Activated CD4-positive, alpha-beta T cell treated with anti-CD3 and anti-CD28 coated beads for 36 hours (primary cell): ENCODE measurements at regions of chr10 and their contacts with region 1.

Region 1: GRCh38 chr10:133261726-133262325 is 14.8 kb downstream of the ADAM8 start:
- DNase-seq: peak; percentile 93
- ATAC-seq: peak; percentile 30
- H3K4me3 Mint-ChIP-seq: peak overlapping the region; percentile 74
- H3K27ac Mint-ChIP-seq: no peak overlapping the region
- H3K4me1 Mint-ChIP-seq: peaks cover 76% of the 10 kb centered on the region
- H3K27me3 Mint-ChIP-seq: no peaks in the 10 kb centered on the region

Region 2: GRCh38 chr10:131981429-131982184 is 1280.2 kb before region 1 on chr10 and contains the start of gene BNIP3:
- CTCF ChIA-PET with region 1: no interaction called
- POLR2A ChIA-PET with region 1: no interaction called
- intact Hi-C with region 1: loop called in 1 of 2 experiments (anchors 5 kb)
- DNase-seq: peak; percentile 97
- ATAC-seq: peak; percentile 90
- H3K4me3 Mint-ChIP-seq: peak within 1 kb of the TSS; percentile 90
- H3K27ac Mint-ChIP-seq: peak within 1 kb of the TSS; percentile 79
- H3K4me1 Mint-ChIP-seq: peaks cover 36% of the 10 kb centered on the region
- H3K27me3 Mint-ChIP-seq: no peaks in the 10 kb centered on the region
- total RNA-seq, gene BNIP3: 200 to 256 TPM

Region 3: DNA sequence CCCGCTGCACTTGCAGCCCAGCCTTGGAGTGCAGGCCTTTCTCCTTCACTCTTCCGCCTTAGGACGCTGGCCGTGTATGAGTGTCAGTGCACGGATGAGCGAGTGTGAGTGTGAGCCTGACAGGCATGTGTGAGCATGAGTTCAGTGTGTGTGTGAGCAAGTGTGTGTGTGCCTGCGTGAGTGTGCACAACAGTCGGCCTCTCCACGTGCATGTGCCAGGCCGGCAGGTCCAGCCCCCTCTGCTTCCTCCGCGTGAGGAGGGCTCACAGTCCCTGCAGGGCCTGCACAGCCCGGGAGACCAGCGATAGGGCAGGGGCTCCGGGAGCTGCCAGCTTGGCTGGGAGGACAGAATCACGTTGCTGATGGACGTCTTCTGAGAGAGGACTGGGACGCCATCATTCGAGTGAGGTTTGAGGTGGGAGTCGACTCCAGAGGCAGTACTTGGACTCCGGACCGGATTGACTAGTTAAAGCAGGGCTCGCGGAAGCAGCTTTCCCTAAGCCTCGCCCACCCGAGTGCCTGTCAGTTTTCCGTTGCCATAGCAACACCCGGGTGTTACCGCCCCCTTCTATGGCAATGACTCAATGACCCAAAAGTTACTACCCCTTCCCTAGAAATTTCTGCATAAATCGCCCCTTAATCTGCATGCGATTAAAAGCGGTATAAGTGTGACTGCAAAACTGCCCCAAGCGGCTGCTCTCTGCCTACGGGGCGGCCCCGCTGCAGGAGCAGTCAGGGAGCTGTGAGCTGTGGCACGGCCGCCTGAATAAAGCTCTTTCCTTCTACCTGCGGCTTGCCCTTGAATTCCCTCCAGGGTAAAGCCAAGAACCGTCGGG is 299.8 kb before region 1 on chr10:
- CTCF ChIA-PET with region 1: interaction called, 3 read pairs
- POLR2A ChIA-PET with region 1: no interaction called
- intact Hi-C with region 1: loop called in 1 of 2 experiments (anchors 1 kb)
- DNase-seq: peak; percentile 90
- ATAC-seq: peak; percentile 82
- H3K4me3 Mint-ChIP-seq: peak overlapping the region; percentile 73
- H3K27ac Mint-ChIP-seq: peak overlapping the region; percentile 71
- H3K4me1 Mint-ChIP-seq: peaks cover 26% of the 10 kb centered on the region
- H3K27me3 Mint-ChIP-seq: peaks cover 26% of the 10 kb centered on the region

Region 4: GRCh38 chr10:133249094-133249780 is 12.6 kb before region 1 on chr10:
- CTCF ChIA-PET with region 1: no interaction called
- POLR2A ChIA-PET with region 1: no interaction called
- intact Hi-C with region 1: no loop called
- DNase-seq: no peak
- ATAC-seq: no peak
- H3K4me3 Mint-ChIP-seq: no peak overlapping the region
- H3K27ac Mint-ChIP-seq: no peak overlapping the region
- H3K4me1 Mint-ChIP-seq: no peaks in the 10 kb centered on the region
- H3K27me3 Mint-ChIP-seq: no peaks in the 10 kb centered on the region

Region 5: DNA sequence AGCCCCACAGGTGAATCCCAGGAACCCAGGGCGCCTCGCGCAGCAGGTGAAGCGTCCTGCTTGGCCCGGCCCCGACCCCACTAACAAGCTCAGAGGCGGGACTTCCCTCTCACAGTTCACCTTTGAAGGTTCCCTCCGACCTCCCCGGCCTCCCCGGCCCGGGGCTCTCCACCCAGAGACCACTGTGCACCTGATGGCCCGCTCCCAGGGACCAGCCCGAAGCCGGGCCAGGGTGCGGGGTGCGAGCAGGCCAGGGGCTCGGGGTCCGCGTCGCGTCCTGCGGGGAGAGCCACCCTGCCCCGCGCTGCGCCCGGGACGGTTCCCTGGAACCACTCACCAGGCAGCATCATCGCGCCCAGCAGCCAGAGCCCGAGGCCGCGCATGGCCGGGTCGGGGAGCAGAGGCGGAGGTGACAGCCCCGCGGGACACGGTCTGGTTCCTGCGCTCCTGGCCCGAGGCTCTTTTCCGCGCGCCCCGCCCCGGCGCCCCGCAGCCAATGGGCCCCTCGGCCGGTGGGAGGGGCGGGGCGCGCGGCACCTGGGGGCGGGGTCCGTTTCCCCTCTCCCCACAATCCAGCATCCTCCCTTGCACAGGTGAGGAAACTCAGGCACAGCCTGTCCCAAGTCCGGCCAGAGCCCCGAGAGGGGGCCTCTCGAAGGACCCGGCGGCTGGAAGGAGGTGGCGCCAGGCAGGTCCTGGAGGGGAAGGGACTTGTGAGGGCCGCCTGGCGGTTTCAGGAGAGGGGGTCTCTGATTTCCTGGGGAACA is 14.8 kb after region 1 on chr10 and contains the start of gene ADAM8:
- CTCF ChIA-PET with region 1: interaction called, 12 read pairs
- POLR2A ChIA-PET with region 1: interaction called, 13 read pairs
- intact Hi-C with region 1: loop called (anchors 1 kb)
- DNase-seq: peak; percentile 86
- ATAC-seq: peak; percentile 55
- H3K4me3 Mint-ChIP-seq: peak within 1 kb of the TSS; percentile 92
- H3K27ac Mint-ChIP-seq: peak within 1 kb of the TSS; percentile 90
- H3K4me1 Mint-ChIP-seq: peaks cover 19% of the 10 kb centered on the region
- H3K27me3 Mint-ChIP-seq: no peaks in the 10 kb centered on the region
- total RNA-seq, gene ADAM8: 124 to 176 TPM

Region 6: DNA sequence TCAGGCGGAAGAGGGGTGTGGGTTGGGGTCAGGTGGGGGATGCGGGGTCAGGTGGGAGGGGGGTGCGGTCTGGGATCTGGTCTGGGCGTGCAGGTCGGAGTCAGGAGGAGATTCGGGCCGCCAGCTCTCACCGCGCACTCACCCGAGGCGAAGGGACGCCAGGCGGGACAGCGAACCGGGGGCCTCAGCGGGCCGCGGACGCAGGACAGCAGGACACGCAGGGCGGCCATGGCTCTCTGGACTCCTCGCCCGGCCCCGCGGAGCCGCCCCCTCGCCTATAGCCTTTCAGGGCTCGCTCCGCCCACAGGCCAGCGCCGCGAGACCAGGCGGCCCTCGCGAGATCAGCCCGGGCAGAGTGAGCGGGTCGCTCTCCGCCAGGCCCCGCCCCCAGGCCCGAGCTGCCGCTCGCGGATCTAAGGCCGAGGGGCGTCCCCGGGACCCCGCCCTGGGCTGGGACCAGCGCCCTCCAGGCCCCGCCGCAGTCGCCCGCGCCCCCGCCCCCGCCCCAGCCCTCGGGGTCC is 111.3 kb after region 1 on chr10 and contains the start of gene ECHS1:
- CTCF ChIA-PET with region 1: no interaction called
- POLR2A ChIA-PET with region 1: no interaction called
- intact Hi-C with region 1: loop called in 1 of 2 experiments (anchors 1 kb)
- DNase-seq: peak; percentile 97
- ATAC-seq: peak; percentile 100
- H3K4me3 Mint-ChIP-seq: peak within 1 kb of the TSS; percentile 73
- H3K27ac Mint-ChIP-seq: peak within 1 kb of the TSS; percentile 79
- H3K4me1 Mint-ChIP-seq: peaks cover 11% of the 10 kb centered on the region
- H3K27me3 Mint-ChIP-seq: no peaks in the 10 kb centered on the region
- total RNA-seq, gene ECHS1: 42.0 to 56.7 TPM

Region 7: GRCh38 chr10:133422821-133423771 is 161.3 kb after region 1 on chr10:
- CTCF ChIA-PET with region 1: no interaction called
- POLR2A ChIA-PET with region 1: no interaction called
- intact Hi-C with region 1: no loop called
- DNase-seq: no peak
- ATAC-seq: peak; percentile 43
- H3K4me3 Mint-ChIP-seq: no peak overlapping the region
- H3K27ac Mint-ChIP-seq: no peak overlapping the region
- H3K4me1 Mint-ChIP-seq: no peaks in the 10 kb centered on the region
- H3K27me3 Mint-ChIP-seq: peaks cover 2% of the 10 kb centered on the region